Thyroid gland (tissue), 4 donors: ENCODE measurements at regions of chr2 and their contacts with region 1.

Region 1: DNA sequence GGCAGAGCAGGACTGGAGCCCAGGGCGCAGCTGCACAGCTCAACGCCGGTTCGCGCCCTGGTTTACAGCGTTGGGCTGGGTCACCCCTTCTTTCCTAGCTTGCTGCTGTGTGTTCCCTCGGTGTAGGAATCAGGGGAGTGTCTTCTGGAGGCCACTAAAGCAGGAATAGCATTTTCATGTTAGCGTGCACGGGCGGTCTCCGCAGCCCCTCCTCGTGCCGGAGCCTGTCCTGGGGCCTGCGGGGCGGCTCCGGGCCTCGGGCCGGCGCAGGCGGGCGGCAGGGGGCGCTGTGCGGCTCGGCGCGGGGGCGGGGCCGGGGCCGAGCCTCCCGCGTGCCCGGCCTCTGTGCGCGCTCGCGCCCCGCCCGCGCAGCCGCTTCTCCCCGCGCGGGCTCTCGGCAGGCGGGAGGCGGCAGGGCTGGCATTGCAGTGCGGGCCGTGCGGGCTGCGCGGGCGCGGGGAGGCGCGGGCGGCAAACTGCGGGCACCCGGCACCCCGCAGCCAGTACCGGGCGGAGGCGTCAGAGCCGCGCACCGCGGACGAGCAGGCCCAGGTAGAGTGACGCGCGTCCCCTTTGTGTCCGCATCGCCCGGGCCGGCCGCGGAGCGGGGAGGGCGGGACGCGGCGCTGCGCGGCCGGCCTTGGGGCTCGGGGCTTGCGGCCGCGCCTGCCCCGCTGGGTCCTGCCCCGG is at the start of gene RNF144A:
- DNase-seq: peak; percentile 54 to 56
- H3K4me3 ChIP-seq: peak within 1 kb of the TSS in 2 of 3 donors; percentile 56 to 69
- H3K27ac ChIP-seq: no peak within 1 kb of the TSS
- H3K4me1 ChIP-seq: peaks cover 6 to 7% of the 10 kb centered on the region in 2 donors
- H3K27me3 ChIP-seq: no peaks in the 10 kb centered on the region
- CTCF ChIP-seq: peak in 5 of 6 experiments; percentile 9 to 71 (median 33)
- POLR2A ChIP-seq: peak in 1 of 2 donors; percentile 60
- total RNA-seq, gene RNF144A: 8.0 to 12.2 (median 10.6) TPM

Region 2: GRCh38 chr2:5539282-5540165 is 1377.7 kb before region 1 on chr2:
- intact Hi-C with region 1: loop called (anchors 10 kb)
- DNase-seq: peak; percentile 65 to 77
- H3K4me3 ChIP-seq: no peak overlapping the region
- H3K27ac ChIP-seq: peak overlapping the region; percentile 80 to 87 (median 81)
- H3K4me1 ChIP-seq: peaks cover 16 to 25% of the 10 kb centered on the region in 2 donors
- H3K27me3 ChIP-seq: no peaks in the 10 kb centered on the region
- CTCF ChIP-seq: no peak
- POLR2A ChIP-seq: no peak

Region 3: GRCh38 chr2:6750411-6751158 is 166.6 kb before region 1 on chr2:
- intact Hi-C with region 1: no loop called
- DNase-seq: no peak
- H3K4me3 ChIP-seq: no peak overlapping the region
- H3K27ac ChIP-seq: no peak overlapping the region
- H3K4me1 ChIP-seq: no peaks in the 10 kb centered on the region
- H3K27me3 ChIP-seq: no peaks in the 10 kb centered on the region
- CTCF ChIP-seq: no peak
- POLR2A ChIP-seq: no peak